Ascending aorta (tissue), 2 donors: ENCODE measurements at regions of chr2 and their contacts with region 1.

Region 1: GRCh38 chr2:206765242-206766056 is at the starts of genes FASTKD2 and MDH1B:
- DNase-seq: peak; percentile 77 to 97
- H3K4me3 ChIP-seq: peak within 1 kb of the TSS; percentile 85 to 92
- H3K27ac ChIP-seq: peak within 1 kb of the TSS; percentile 85 to 90
- H3K4me1 ChIP-seq: peaks cover 5 to 24% of the 10 kb centered on the region in 2 donors
- H3K27me3 ChIP-seq: no peaks in the 10 kb centered on the region
- CTCF ChIP-seq: no peak
- total RNA-seq, gene FASTKD2: 41.5 TPM
- total RNA-seq, gene MDH1B: not detected

Region 2: DNA sequence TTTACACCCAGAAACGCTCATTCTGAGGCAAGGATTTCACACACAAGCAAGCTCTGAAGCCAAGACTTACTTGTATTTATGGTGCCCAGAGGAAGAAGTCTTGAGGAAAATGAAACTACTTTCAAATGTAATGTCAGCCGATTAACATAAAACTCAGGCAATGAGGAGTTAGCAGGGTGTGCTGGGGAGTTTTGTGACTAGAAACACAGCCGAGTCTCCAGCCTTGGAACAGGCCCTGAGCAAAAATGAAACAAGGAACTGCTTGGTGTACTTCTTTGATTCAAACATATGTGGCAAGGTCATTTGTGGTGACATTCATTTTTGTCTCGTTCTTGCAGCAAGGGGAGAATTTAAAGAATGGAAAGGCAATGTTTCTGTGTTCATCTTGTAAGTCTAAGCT is 51.7 kb before region 1 on chr2:
- intact Hi-C with region 1: no loop called
- DNase-seq: no peak
- H3K4me3 ChIP-seq: no peak overlapping the region
- H3K27ac ChIP-seq: no peak overlapping the region
- H3K4me1 ChIP-seq: no peaks in the 10 kb centered on the region
- H3K27me3 ChIP-seq: no peaks in the 10 kb centered on the region
- CTCF ChIP-seq: no peak

Region 3: GRCh38 chr2:206968134-206969086 is 203.0 kb after region 1 on chr2:
- intact Hi-C with region 1: loop called (anchors 5 kb)
- DNase-seq: peak in 1 of 2 donors; percentile 80
- H3K4me3 ChIP-seq: peak overlapping the region in 1 of 2 donors; percentile 28
- H3K27ac ChIP-seq: peak overlapping the region; percentile 75 to 78
- H3K4me1 ChIP-seq: peaks cover 4 to 21% of the 10 kb centered on the region in 2 donors
- H3K27me3 ChIP-seq: no peaks in the 10 kb centered on the region
- CTCF ChIP-seq: no peak

Region 4: GRCh38 chr2:207710814-207711740 is 945.6 kb after region 1 on chr2 and contains the start of gene CCNYL1:
- intact Hi-C with region 1: loop called (anchors 2 kb)
- DNase-seq: peak; percentile 95 to 99
- H3K4me3 ChIP-seq: peak within 1 kb of the TSS; percentile 75 to 92
- H3K27ac ChIP-seq: peak within 1 kb of the TSS; percentile 88 to 90
- H3K4me1 ChIP-seq: peaks cover 0 to 6% of the 10 kb centered on the region in 2 donors
- H3K27me3 ChIP-seq: no peaks in the 10 kb centered on the region
- CTCF ChIP-seq: peak; percentile 17 to 55 (median 17)
- total RNA-seq, gene CCNYL1: 12.3 TPM